Common myeloid progenitor, CD34-positive (primary cell): ENCODE measurements at regions of chr6 and their contacts with region 1.

Region 1: GRCh38 chr6:14066782-14067406 is 50.7 kb upstream of the CD83 start:
- DNase-seq: peak; percentile 58 to 75 (median 72)
- H3K4me3 ChIP-seq: no peak overlapping the region
- H3K27ac ChIP-seq: no peak overlapping the region
- H3K4me1 ChIP-seq: peaks cover 0 to 17% (median 7%) of the 10 kb centered on the region in 4 experiments
- H3K27me3 ChIP-seq: peaks cover 0 to 2% (median 0%) of the 10 kb centered on the region in 5 experiments

Region 2: DNA sequence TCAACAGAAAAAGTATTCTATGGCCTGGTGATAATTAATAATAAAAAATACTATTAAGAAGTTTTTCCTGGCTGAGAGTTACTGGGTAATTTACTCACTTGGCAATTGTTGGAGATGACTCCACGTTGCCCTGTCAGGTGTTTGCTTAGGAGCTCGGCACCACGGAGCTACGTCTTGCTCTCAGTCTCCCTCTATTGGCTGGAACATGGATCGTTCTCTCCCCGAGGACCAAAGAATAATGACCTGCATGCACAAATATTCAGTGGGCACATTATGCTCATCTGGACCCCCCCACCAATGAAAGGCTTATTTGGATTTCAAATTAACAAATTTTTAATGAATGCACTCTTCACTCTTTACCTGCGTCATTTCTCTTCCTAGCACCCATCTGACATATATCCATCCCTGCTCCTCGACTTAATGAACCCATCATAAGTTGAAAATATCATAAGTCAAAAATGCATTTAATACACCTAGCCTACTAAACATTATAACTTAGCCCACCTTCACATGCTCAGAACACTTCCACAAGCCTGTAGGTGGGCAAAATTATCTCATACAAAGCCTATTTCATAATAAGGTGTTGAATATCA is 20.3 kb before region 1 on chr6:
- CTCF ChIA-PET with region 1: interaction called, 15 read pairs
- POLR2A ChIA-PET with region 1: interaction called, 4 read pairs
- DNase-seq: peak; percentile 61 to 76 (median 69)
- H3K4me3 ChIP-seq: no peak overlapping the region
- H3K27ac ChIP-seq: no peak overlapping the region
- H3K4me1 ChIP-seq: no peaks in the 10 kb centered on the region
- H3K27me3 ChIP-seq: peaks cover 0 to 8% (median 2%) of the 10 kb centered on the region in 5 experiments

Region 3: DNA sequence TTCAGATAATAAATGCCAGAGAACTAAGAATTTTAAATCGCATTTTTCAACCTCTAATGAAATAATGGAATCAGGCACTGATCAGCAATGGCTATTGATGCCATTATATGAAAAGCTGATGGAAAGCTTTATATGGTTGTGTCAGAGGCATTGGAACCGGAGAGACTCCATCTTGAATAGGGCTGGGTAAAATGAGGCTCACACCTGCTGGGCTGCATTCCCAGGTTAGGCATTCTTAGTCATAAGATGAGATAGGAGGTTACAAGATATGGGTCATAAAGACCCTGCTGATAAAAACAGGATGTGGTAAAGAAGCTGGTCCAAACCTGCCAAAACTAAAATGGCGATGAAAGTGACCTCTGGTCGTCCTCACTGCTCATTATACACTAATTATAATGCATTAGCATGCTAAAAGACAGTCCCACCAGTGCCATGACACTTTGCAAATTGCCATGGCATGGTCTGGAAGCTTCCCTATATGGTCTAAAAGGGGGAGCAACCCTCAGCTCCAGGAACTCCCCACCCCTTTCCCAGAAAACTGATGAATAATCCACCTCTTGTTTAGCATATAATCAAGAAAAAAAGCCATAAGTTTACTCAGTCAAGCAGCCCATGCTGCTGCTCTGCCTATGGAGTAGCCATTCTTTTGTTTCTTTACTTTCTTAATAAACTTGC is 10.4 kb after region 1 on chr6:
- CTCF ChIA-PET with region 1: interaction called, 10 read pairs
- POLR2A ChIA-PET with region 1: no interaction called
- DNase-seq: no peak
- H3K4me3 ChIP-seq: no peak overlapping the region
- H3K27ac ChIP-seq: no peak overlapping the region
- H3K4me1 ChIP-seq: peaks cover 4 to 7% (median 6%) of the 10 kb centered on the region in 4 experiments
- H3K27me3 ChIP-seq: no peaks in the 10 kb centered on the region

Region 4: GRCh38 chr6:14095437-14095836 is 28.5 kb after region 1 on chr6:
- CTCF ChIA-PET with region 1: no interaction called
- POLR2A ChIA-PET with region 1: no interaction called
- DNase-seq: no peak
- H3K4me3 ChIP-seq: no peak overlapping the region
- H3K27ac ChIP-seq: peak overlapping the region in 1 of 2 experiments; percentile 36
- H3K4me1 ChIP-seq: peaks cover 0 to 13% (median 0%) of the 10 kb centered on the region in 4 experiments
- H3K27me3 ChIP-seq: no peaks in the 10 kb centered on the region

Region 5: GRCh38 chr6:14117158-14118090 is 50.5 kb after region 1 on chr6 and contains the start of gene CD83:
- CTCF ChIA-PET with region 1: interaction called, 18 read pairs
- POLR2A ChIA-PET with region 1: no interaction called
- DNase-seq: peak; percentile 90 to 94 (median 93)
- H3K4me3 ChIP-seq: peak within 1 kb of the TSS; percentile 53 to 88 (median 72)
- H3K27ac ChIP-seq: peak within 1 kb of the TSS in 1 of 2 experiments; percentile 78
- H3K4me1 ChIP-seq: peaks cover 7 to 25% (median 22%) of the 10 kb centered on the region in 4 experiments
- H3K27me3 ChIP-seq: no peaks in the 10 kb centered on the region

Region 6: GRCh38 chr6:14243617-14244016 is 176.7 kb after region 1 on chr6:
- CTCF ChIA-PET with region 1: no interaction called
- POLR2A ChIA-PET with region 1: no interaction called
- DNase-seq: no peak
- H3K4me3 ChIP-seq: no peak overlapping the region
- H3K27ac ChIP-seq: no peak overlapping the region
- H3K4me1 ChIP-seq: peaks cover under 1 to 15% (median 12%) of the 10 kb centered on the region in 4 experiments
- H3K27me3 ChIP-seq: no peaks in the 10 kb centered on the region